CD8-positive, alpha-beta T cell (primary cell): ENCODE measurements at regions of chr7 and their contacts with region 1.

Region 1: DNA sequence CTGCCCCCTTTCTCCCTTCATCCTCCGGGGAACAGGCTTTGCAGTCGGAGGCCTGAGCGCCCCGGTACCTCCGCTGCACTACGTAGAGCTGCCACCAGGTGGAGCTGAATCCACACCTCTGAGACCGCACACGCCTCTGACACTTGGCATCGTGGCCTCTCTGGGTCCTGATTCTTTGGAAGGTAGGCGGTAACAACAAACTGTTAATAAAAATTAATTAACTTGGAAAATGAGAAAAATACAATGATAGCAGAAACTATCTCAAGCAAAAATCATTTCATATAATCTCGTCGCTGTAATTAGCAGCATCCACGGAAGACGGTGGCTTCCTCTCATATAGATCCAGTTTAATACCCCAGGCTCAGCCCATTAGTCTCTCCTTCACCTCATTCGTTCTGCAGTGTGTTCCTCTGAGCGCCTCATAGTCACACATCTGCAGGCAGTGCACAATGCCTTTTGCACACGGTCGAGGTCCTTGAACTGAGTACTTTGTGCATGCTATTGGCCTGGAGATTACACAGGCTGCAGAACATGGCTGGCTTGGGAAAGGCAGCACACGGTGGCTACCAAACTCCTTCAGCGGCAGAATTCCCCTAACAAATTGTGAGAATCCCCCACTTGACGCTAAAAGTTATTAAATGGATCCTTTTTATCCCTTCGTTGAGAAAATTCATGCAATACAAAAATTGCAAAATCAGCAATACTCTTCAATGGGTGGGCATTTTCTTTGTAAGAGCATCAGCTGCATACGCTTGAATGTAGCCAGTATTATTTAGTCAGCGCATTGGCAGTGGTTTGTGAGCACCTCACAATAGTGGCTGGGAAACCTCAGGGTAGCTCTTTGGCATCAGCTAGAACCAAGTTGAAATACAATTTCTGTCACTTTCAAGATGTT is 18.7 kb downstream of the OR9A2 start:
- DNase-seq: peak; percentile 70 to 89 (median 83)
- ATAC-seq: peak; percentile 98
- H3K4me3 ChIP-seq: no peak overlapping the region
- H3K4me3 Mint-ChIP-seq: no peak overlapping the region
- H3K27ac ChIP-seq: no peak overlapping the region
- H3K27ac Mint-ChIP-seq: no peak overlapping the region
- H3K4me1 ChIP-seq: no peaks in the 10 kb centered on the region
- H3K4me1 Mint-ChIP-seq: peaks cover 4% of the 10 kb centered on the region
- H3K27me3 ChIP-seq: peaks cover 0 to 2% of the 10 kb centered on the region in 2 experiments
- H3K27me3 Mint-ChIP-seq: peaks cover 8% of the 10 kb centered on the region
- CTCF ChIP-seq: peak; percentile 93

Region 2: GRCh38 chr7:141975806-141976523 is 1032.3 kb before region 1 on chr7:
- CTCF ChIA-PET with region 1: no interaction called
- POLR2A ChIA-PET with region 1: no interaction called
- intact Hi-C with region 1: loop called (anchors 5 kb)
- DNase-seq: peak; percentile 17 to 81 (median 64)
- ATAC-seq: peak; percentile 82
- H3K4me3 ChIP-seq: peak overlapping the region; percentile 46 to 50
- H3K4me3 Mint-ChIP-seq: peak overlapping the region; percentile 79
- H3K27ac ChIP-seq: peak overlapping the region in 1 of 2 experiments; percentile 18
- H3K27ac Mint-ChIP-seq: peak overlapping the region; percentile 46
- H3K4me1 ChIP-seq: peaks cover 6% of the 10 kb centered on the region
- H3K4me1 Mint-ChIP-seq: peaks cover 22% of the 10 kb centered on the region
- H3K27me3 ChIP-seq: no peaks in the 10 kb centered on the region
- H3K27me3 Mint-ChIP-seq: no peaks in the 10 kb centered on the region
- CTCF ChIP-seq: peak; percentile 76

Region 3: DNA sequence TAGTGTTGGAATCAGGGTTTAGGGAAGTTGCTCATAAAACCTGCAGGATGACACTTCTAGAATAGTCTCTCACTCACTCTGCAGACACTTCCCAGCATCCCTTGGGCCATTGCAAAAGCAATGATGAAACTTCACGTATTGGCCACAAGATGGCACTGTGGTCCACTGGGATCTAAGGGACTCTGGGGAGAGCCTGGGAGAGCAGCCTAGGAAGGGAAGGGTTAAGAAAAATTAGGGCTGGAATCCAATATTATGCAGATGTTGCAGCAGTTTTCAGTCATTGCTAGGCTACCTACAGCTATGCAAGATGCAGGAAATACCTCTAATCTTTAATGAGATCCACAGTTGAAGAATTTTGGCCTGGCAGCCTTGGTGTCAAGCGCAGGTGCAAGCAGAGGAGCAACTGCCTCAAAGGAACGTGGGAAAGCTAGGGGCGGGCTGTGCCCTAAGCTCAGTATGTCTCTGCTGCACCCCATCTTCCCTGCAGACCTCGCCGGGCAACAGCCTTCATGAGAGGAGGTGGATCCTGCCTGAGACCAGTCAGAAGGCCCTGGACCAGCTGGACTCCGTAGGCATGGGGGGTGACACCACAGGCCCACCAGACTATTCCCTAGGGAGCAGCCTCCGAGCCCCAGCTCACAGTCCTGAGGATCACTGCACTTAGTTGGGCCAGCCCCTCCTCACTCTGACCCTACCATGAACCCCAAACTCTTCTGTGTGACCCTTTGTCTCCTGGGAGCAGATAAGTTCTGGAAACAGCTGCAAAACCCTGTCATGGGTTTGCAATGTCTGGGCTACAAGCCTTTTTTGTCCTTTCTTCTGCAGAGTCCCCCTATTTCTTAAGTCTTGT is 622.5 kb before region 1 on chr7:
- CTCF ChIA-PET with region 1: interaction called, 5 read pairs
- POLR2A ChIA-PET with region 1: no interaction called
- intact Hi-C with region 1: loop called in 1 of 2 experiments (anchors 10 kb)
- DNase-seq: peak in 5 of 9 experiments; percentile 23 to 64 (median 52)
- ATAC-seq: peak; percentile 62
- H3K4me3 ChIP-seq: no peak overlapping the region
- H3K4me3 Mint-ChIP-seq: no peak overlapping the region
- H3K27ac ChIP-seq: no peak overlapping the region
- H3K27ac Mint-ChIP-seq: no peak overlapping the region
- H3K4me1 ChIP-seq: peaks cover 18% of the 10 kb centered on the region
- H3K4me1 Mint-ChIP-seq: peaks cover 26% of the 10 kb centered on the region
- H3K27me3 ChIP-seq: no peaks in the 10 kb centered on the region
- H3K27me3 Mint-ChIP-seq: no peaks in the 10 kb centered on the region
- CTCF ChIP-seq: peak; percentile 43

Region 4: GRCh38 chr7:142603870-142604448 is 404.3 kb before region 1 on chr7:
- CTCF ChIA-PET with region 1: interaction called, 8 read pairs
- POLR2A ChIA-PET with region 1: no interaction called
- intact Hi-C with region 1: loop called (anchors 1 to 5 kb)
- DNase-seq: peak; percentile 5 to 70 (median 48)
- ATAC-seq: peak; percentile 67
- H3K4me3 ChIP-seq: no peak overlapping the region
- H3K4me3 Mint-ChIP-seq: no peak overlapping the region
- H3K27ac ChIP-seq: no peak overlapping the region
- H3K27ac Mint-ChIP-seq: peak overlapping the region; percentile 28
- H3K4me1 ChIP-seq: no peaks in the 10 kb centered on the region
- H3K4me1 Mint-ChIP-seq: peaks cover 3% of the 10 kb centered on the region
- H3K27me3 ChIP-seq: no peaks in the 10 kb centered on the region
- H3K27me3 Mint-ChIP-seq: peaks cover 2% of the 10 kb centered on the region
- CTCF ChIP-seq: peak; percentile 68

Region 5: DNA sequence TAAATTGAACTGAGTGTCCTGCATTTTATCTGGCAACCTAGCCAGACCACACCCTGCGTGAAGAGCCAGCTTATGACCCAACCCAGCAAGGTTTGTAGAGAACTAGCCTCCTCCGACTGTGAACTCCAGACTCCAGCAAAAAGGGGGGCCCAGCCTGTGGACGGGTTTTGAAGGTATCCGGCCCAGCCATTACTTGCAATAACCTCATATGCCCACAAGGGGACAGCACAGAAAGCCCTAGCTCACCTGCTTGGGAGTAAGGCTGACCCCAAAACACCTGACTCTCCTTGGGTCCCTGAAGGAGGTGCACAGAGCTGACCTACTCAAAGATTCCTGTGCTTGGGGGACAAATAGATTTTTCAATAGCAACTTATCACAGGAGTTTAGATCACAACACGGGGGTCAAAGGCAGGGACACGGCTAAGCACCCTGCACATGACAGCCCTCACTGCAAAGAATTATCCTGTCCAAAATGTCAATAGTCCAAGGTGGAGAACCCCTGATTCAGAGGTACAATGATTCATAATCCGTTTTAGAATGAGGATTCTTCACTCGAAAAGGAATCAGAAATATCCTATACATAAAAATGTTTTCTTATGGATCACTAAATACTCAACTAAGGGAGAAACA is 127.3 kb before region 1 on chr7:
- CTCF ChIA-PET with region 1: interaction called, 15 read pairs
- POLR2A ChIA-PET with region 1: no interaction called
- intact Hi-C with region 1: no loop called
- DNase-seq: peak; percentile 14 to 70 (median 47)
- ATAC-seq: peak; percentile 80
- H3K4me3 ChIP-seq: no peak overlapping the region
- H3K4me3 Mint-ChIP-seq: no peak overlapping the region
- H3K27ac ChIP-seq: no peak overlapping the region
- H3K27ac Mint-ChIP-seq: no peak overlapping the region
- H3K4me1 ChIP-seq: no peaks in the 10 kb centered on the region
- H3K4me1 Mint-ChIP-seq: no peaks in the 10 kb centered on the region
- H3K27me3 ChIP-seq: peaks cover 0 to 2% of the 10 kb centered on the region in 2 experiments
- H3K27me3 Mint-ChIP-seq: no peaks in the 10 kb centered on the region
- CTCF ChIP-seq: peak; percentile 74

Region 6: DNA sequence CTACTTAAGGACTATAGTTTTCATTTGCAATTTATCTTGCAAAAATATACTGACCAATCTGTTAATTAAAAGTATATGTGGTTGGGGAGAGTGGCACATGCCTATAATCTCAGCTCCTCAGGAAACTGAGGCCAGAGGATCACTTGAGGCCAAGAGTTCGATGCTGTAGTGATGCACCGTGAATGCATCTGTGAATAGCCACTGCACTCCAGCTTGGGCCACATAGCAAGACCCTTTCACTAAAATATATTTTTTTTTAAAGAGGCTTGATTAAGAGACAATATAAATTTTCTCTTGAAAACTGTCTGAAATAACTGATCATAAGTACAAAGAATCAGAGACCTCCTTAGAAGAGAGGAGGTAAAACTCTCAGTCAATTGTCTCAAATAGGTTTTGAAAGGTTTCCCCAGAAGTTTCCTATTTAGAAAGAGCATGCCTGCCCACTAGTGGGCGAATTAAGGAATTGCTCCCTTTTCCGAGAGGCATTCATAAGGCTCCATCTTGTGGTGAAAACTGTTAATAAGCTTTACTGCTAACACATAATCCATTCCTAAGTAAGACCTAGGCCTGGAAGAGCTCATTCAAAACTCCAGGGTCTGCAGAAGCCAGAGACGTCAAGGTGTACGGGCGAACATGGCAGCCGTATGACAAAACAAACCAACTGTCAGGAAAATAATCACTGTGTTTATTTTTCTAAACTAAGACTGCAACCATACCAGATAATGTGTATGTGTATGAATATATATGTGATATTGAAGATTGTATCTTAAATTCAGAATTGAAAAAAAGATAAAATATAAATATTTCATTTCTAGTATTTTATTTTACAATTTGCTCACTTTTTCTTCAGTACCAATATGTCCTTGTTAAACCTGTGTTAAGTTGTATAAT is 206.8 kb after region 1 on chr7:
- CTCF ChIA-PET with region 1: interaction called, 256 read pairs
- POLR2A ChIA-PET with region 1: interaction called, 7 read pairs
- intact Hi-C with region 1: loop called (anchors 1 kb)
- DNase-seq: peak; percentile 25 to 87 (median 59)
- ATAC-seq: peak; percentile 98
- H3K4me3 ChIP-seq: no peak overlapping the region
- H3K4me3 Mint-ChIP-seq: no peak overlapping the region
- H3K27ac ChIP-seq: no peak overlapping the region
- H3K27ac Mint-ChIP-seq: no peak overlapping the region
- H3K4me1 ChIP-seq: no peaks in the 10 kb centered on the region
- H3K4me1 Mint-ChIP-seq: no peaks in the 10 kb centered on the region
- H3K27me3 ChIP-seq: no peaks in the 10 kb centered on the region
- H3K27me3 Mint-ChIP-seq: peaks cover 4% of the 10 kb centered on the region
- CTCF ChIP-seq: peak; percentile 100

Region 7: DNA sequence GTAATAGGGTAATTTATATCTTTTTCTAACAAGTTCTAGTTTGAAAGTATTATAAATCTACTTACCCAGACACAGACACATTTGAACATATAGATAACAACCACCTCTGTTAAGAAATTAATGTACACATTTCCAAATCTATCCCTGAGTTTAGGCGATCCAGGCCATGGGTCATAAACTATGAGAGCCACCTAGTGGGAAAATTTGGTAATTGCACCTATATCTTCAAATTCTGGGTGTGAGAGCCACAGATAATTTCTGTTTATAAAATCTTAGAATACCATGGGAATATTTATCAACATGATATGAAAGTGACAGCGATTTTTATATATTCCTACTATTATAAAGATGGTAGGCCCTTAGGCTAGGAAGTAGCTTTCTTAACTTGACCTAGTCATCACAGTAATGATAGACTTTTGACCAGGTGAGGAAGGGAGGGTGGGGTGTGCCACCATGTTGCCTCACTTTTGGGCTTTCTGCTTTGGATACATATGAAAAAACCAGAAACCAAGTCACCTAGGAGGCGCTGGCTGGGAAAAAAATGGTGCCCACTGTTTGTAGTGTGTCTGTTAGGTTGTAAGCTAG is 408.4 kb after region 1 on chr7:
- CTCF ChIA-PET with region 1: no interaction called
- POLR2A ChIA-PET with region 1: no interaction called
- intact Hi-C with region 1: loop called (anchors 1 to 5 kb)
- DNase-seq: peak in 4 of 9 experiments; percentile 23 to 72 (median 47)
- ATAC-seq: peak; percentile 69
- H3K4me3 ChIP-seq: no peak overlapping the region
- H3K4me3 Mint-ChIP-seq: no peak overlapping the region
- H3K27ac ChIP-seq: no peak overlapping the region
- H3K27ac Mint-ChIP-seq: no peak overlapping the region
- H3K4me1 ChIP-seq: peaks cover 3% of the 10 kb centered on the region
- H3K4me1 Mint-ChIP-seq: peaks cover 16% of the 10 kb centered on the region
- H3K27me3 ChIP-seq: no peaks in the 10 kb centered on the region
- H3K27me3 Mint-ChIP-seq: peaks cover 2% of the 10 kb centered on the region
- CTCF ChIP-seq: peak; percentile 80